Activated B cell treated with CpG ODN at 0.5 μM for 24 hours (primary cell): ENCODE measurements at regions of chr5 and their contacts with region 1.

Region 1: GRCh38 chr5:134101686-134102439 is 12.6 kb upstream of the TCF7 start:
- DNase-seq: peak; percentile 76
- ATAC-seq: peak; percentile 38
- H3K4me3 Mint-ChIP-seq: peak overlapping the region; percentile 32
- H3K27ac Mint-ChIP-seq: peak overlapping the region; percentile 99
- H3K4me1 Mint-ChIP-seq: peaks cover 56% of the 10 kb centered on the region
- H3K27me3 Mint-ChIP-seq: no peaks in the 10 kb centered on the region
- CTCF ChIP-seq: no peak

Region 2: GRCh38 chr5:132734687-132735086 is 1367.2 kb before region 1 on chr5:
- CTCF ChIA-PET with region 1: no interaction called
- POLR2A ChIA-PET with region 1: no interaction called
- intact Hi-C with region 1: no loop called
- DNase-seq: no peak
- ATAC-seq: no peak
- H3K4me3 Mint-ChIP-seq: no peak overlapping the region
- H3K27ac Mint-ChIP-seq: no peak overlapping the region
- H3K4me1 Mint-ChIP-seq: peaks cover 18% of the 10 kb centered on the region
- H3K27me3 Mint-ChIP-seq: no peaks in the 10 kb centered on the region
- CTCF ChIP-seq: no peak

Region 3: GRCh38 chr5:133051580-133052332 is 1050.1 kb before region 1 on chr5 and contains the start of gene HSPA4:
- CTCF ChIA-PET with region 1: no interaction called
- POLR2A ChIA-PET with region 1: no interaction called
- intact Hi-C with region 1: loop called (anchors 5 kb)
- DNase-seq: peak; percentile 93
- ATAC-seq: peak; percentile 85
- H3K4me3 Mint-ChIP-seq: peak within 1 kb of the TSS; percentile 96
- H3K27ac Mint-ChIP-seq: peak within 1 kb of the TSS; percentile 99
- H3K4me1 Mint-ChIP-seq: peaks cover 64% of the 10 kb centered on the region
- H3K27me3 Mint-ChIP-seq: no peaks in the 10 kb centered on the region
- CTCF ChIP-seq: no peak
- total RNA-seq, gene HSPA4: 152 and 162 TPM in 2 replicates

Region 4: GRCh38 chr5:133627180-133627579 is 474.7 kb before region 1 on chr5:
- CTCF ChIA-PET with region 1: no interaction called
- POLR2A ChIA-PET with region 1: no interaction called
- intact Hi-C with region 1: no loop called
- DNase-seq: no peak
- ATAC-seq: peak; percentile 85
- H3K4me3 Mint-ChIP-seq: no peak overlapping the region
- H3K27ac Mint-ChIP-seq: no peak overlapping the region
- H3K4me1 Mint-ChIP-seq: no peaks in the 10 kb centered on the region
- H3K27me3 Mint-ChIP-seq: peaks cover 31% of the 10 kb centered on the region
- CTCF ChIP-seq: no peak

Region 5: GRCh38 chr5:134004592-134005375 is 97.1 kb before region 1 on chr5 and contains the start of gene VDAC1:
- CTCF ChIA-PET with region 1: no interaction called
- POLR2A ChIA-PET with region 1: interaction called, 8 read pairs
- intact Hi-C with region 1: loop called (anchors 1 kb)
- DNase-seq: peak; percentile 81
- ATAC-seq: peak; percentile 82
- H3K4me3 Mint-ChIP-seq: peak within 1 kb of the TSS; percentile 92
- H3K27ac Mint-ChIP-seq: peak within 1 kb of the TSS; percentile 93
- H3K4me1 Mint-ChIP-seq: peaks cover 38% of the 10 kb centered on the region
- H3K27me3 Mint-ChIP-seq: no peaks in the 10 kb centered on the region
- CTCF ChIP-seq: no peak
- total RNA-seq, gene VDAC1: 158 and 164 TPM in 2 replicates

Region 6: GRCh38 chr5:134070725-134071613 is 30.9 kb before region 1 on chr5:
- CTCF ChIA-PET with region 1: interaction called, 6 read pairs
- POLR2A ChIA-PET with region 1: interaction called, 6 read pairs
- intact Hi-C with region 1: loop called (anchors 1 kb)
- DNase-seq: no peak
- ATAC-seq: peak; percentile 40
- H3K4me3 Mint-ChIP-seq: peak overlapping the region; percentile 72
- H3K27ac Mint-ChIP-seq: no peak overlapping the region
- H3K4me1 Mint-ChIP-seq: peaks cover 9% of the 10 kb centered on the region
- H3K27me3 Mint-ChIP-seq: peaks cover 22% of the 10 kb centered on the region
- CTCF ChIP-seq: no peak

Region 7: DNA sequence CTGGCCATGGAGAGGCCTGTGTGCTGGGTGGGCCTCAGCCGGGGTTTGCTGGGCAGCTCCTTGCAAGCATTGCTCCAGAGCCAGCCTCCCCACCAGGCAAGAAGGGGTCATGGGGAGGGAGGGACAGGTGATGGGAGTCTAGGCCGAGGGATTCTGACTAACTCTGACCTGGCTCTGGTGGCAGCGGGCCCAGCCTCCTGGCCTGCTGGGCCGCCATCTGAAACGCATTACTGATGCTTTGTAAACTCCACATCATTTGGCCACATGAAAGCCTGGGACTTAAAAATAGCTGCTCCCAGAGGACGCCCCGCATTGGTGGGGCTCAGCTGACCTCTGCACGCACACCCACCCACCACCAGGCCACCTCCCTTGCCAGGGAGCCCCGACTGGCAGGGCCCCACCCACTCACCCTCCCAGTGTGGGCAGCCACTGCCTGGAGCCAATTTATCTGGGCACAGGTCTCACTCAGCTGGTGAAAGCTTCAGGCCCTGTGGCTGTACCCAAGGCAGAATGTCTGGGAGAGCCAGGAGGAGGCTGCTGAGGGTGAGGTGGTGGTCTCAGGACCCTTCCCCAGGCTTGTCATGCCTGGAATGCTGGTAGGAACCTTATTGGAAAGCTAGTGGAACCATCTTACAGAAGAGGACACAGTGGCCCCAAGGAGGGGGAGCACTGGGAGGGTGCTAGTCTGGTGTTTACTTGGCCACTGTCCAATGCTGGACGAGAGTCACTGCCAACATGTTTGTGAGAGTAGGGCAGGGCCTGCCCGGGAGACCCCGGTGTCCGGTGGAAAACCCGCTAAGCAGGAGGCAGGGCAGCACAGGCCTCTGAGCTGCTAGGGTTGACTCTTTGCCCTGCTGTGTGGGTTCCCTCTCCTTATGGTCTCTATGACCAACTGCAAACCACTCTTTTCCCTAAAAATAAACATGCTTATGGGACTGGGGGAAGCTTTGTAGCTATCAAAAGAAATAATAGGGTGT is 23.5 kb after region 1 on chr5:
- CTCF ChIA-PET with region 1: interaction called, 3 read pairs
- POLR2A ChIA-PET with region 1: interaction called, 13 read pairs
- intact Hi-C with region 1: no loop called
- DNase-seq: no peak
- ATAC-seq: peak; percentile 15
- H3K4me3 Mint-ChIP-seq: no peak overlapping the region
- H3K27ac Mint-ChIP-seq: no peak overlapping the region
- H3K4me1 Mint-ChIP-seq: peaks cover 62% of the 10 kb centered on the region
- H3K27me3 Mint-ChIP-seq: no peaks in the 10 kb centered on the region
- CTCF ChIP-seq: no peak

Region 8: DNA sequence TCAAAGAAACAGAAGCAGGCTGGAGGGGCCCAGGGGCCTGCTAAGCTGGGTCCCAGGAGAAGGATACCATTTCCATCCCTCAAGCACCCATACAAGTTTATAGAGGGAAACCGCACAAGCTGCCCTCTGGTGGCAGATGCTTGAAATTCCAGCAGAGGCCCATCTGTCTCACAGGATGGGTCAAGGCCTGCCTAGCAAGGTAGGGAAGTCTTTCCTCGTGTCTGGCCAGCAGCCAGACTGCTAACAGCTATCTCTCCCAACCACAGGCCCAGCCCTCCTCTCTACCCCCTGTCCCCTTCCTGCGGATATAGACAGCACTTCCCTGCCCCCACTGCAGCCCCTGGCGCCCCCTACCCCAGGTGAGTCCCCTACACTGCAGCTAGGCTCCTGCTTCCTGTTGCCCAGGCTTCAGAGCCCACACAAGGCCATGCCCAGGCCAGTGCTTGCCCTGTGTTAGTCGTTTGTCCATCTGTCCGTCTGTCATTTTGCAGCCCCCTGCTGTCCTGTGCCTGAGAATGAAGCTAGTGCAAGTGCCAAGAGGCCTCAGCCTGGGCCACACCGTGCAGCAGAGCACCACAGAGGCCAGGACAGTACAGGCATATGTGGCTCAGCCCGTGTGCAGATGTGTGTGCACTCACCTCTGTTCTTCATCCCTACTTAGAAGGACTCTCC is 38.8 kb after region 1 on chr5:
- CTCF ChIA-PET with region 1: interaction called, 15 read pairs
- POLR2A ChIA-PET with region 1: interaction called, 71 read pairs
- intact Hi-C with region 1: loop called (anchors 1 kb)
- DNase-seq: peak; percentile 41
- ATAC-seq: peak; percentile 68
- H3K4me3 Mint-ChIP-seq: no peak overlapping the region
- H3K27ac Mint-ChIP-seq: peak overlapping the region; percentile 68
- H3K4me1 Mint-ChIP-seq: peaks cover 47% of the 10 kb centered on the region
- H3K27me3 Mint-ChIP-seq: no peaks in the 10 kb centered on the region
- CTCF ChIP-seq: peak; percentile 31

Region 9: DNA sequence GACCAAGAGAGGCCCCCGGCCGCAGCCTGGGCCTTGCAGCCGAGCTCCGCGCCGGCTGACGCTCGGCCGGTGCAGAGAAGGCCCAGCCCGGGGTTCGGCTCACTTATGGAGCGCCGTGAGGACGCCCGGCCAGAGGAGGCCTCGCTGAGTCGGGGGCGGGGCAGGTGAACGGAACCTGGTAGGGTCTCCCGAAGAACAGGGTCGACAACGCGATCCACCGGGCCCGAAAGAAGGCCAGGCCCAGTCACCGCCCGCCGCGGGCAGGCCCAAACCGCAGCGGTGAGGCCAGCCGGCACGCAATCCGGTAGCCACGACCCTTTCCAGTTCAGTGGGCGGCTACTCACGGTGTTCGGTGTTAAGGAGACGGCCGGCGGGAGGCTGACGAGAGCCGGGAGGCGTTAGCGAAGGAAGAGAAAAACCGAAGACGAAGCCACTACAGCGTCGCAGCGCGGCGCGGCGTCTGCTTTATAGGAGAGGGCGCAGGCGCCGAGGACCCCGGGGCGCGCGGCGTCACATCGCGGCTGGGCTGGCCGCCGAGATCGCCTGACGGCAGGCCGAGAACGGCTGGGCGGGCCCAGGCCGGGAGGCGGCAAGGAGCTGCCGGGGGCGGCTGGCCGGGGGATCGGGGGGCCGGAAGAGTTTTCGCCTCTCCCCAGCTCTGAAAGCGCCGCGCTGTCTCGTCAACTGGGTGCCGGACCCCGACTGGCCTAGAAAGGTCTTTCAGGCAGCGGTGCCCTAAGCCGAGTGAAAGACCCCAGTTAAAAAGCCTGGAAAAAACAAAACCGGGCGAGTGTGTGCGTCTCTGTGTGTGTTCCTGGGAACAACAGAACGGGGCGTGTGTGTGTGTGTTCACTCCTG is 74.9 kb after region 1 on chr5 and contains the start of gene SKP1:
- CTCF ChIA-PET with region 1: no interaction called
- POLR2A ChIA-PET with region 1: interaction called, 16 read pairs
- intact Hi-C with region 1: loop called (anchors 1 kb)
- DNase-seq: peak; percentile 91
- ATAC-seq: peak; percentile 86
- H3K4me3 Mint-ChIP-seq: peak within 1 kb of the TSS; percentile 93
- H3K27ac Mint-ChIP-seq: peak within 1 kb of the TSS; percentile 96
- H3K4me1 Mint-ChIP-seq: peaks cover 26% of the 10 kb centered on the region
- H3K27me3 Mint-ChIP-seq: no peaks in the 10 kb centered on the region
- CTCF ChIP-seq: no peak
- total RNA-seq, gene SKP1: 193 and 211 TPM in 2 replicates

Region 10: GRCh38 chr5:134195666-134196065 is 93.8 kb after region 1 on chr5:
- CTCF ChIA-PET with region 1: no interaction called
- POLR2A ChIA-PET with region 1: no interaction called
- intact Hi-C with region 1: no loop called
- DNase-seq: no peak
- ATAC-seq: no peak
- H3K4me3 Mint-ChIP-seq: no peak overlapping the region
- H3K27ac Mint-ChIP-seq: no peak overlapping the region
- H3K4me1 Mint-ChIP-seq: no peaks in the 10 kb centered on the region
- H3K27me3 Mint-ChIP-seq: no peaks in the 10 kb centered on the region
- CTCF ChIP-seq: no peak